Mammary epithelial cell (primary cell): ENCODE measurements at regions of chr2 and their contacts with region 1.

Region 1: DNA sequence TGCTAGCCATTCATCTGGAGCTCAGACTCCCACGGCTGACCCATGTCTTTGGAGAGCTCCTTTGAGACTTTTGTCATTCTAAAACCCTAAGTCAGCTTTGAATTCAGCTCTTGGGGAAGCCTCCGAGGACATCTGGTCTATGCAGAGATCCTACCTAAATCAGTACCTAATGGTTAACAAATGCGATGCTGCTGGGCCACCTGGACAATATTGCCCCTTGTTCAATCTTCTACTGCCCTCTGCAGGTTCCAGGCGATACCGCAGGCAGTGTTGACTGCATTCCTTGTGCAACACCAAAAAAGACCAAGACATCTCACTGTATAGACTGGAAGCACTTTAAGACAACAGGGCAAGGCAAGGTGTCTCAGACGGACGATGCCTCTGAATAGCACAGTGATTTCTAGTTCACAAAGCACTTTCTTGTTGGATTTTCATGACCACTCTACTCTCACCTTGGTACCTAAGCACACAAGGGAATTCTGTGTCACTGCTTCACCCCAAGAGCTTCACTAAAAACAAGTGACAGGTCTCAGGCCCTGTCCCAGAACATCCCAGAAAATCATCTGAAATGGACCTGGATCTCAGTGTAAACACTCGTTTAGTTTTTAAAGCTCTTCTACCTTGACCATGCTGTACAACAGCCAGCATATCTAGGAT is 80.9 kb downstream of the XDH start:
- DNase-seq: peak; percentile 82
- H3K4me3 ChIP-seq: no peak overlapping the region
- H3K27ac ChIP-seq: peak overlapping the region; percentile 93
- H3K4me1 ChIP-seq: peaks cover 48% of the 10 kb centered on the region
- H3K27me3 ChIP-seq: no peaks in the 10 kb centered on the region
- CTCF ChIP-seq: peak; percentile 98 to 99

Region 2: GRCh38 chr2:30862054-30862651 is 471.5 kb before region 1 on chr2:
- CTCF ChIA-PET with region 1: no interaction called
- dilution Hi-C with region 1: no loop called
- in situ Hi-C with region 1: loop called (anchors 10 kb)
- intact Hi-C with region 1: loop called (anchors 1 kb)
- DNase-seq: peak; percentile 61
- H3K4me3 ChIP-seq: no peak overlapping the region
- H3K27ac ChIP-seq: no peak overlapping the region
- H3K4me1 ChIP-seq: no peaks in the 10 kb centered on the region
- H3K27me3 ChIP-seq: no peaks in the 10 kb centered on the region
- CTCF ChIP-seq: peak; percentile 84 to 89

Region 3: GRCh38 chr2:31138037-31138962 is 195.4 kb before region 1 on chr2 and contains the start of gene GALNT14:
- CTCF ChIA-PET with region 1: no interaction called
- dilution Hi-C with region 1: no loop called
- in situ Hi-C with region 1: no loop called
- intact Hi-C with region 1: loop called (anchors 1 kb)
- DNase-seq: peak; percentile 82
- H3K4me3 ChIP-seq: peak within 1 kb of the TSS; percentile 71 to 88 (median 80)
- H3K27ac ChIP-seq: peak within 1 kb of the TSS; percentile 59
- H3K4me1 ChIP-seq: no peaks in the 10 kb centered on the region
- H3K27me3 ChIP-seq: no peaks in the 10 kb centered on the region
- CTCF ChIP-seq: peak; percentile 52 to 72
- total RNA-seq, gene GALNT14: 12.7 to 29.9 TPM

Region 4: DNA sequence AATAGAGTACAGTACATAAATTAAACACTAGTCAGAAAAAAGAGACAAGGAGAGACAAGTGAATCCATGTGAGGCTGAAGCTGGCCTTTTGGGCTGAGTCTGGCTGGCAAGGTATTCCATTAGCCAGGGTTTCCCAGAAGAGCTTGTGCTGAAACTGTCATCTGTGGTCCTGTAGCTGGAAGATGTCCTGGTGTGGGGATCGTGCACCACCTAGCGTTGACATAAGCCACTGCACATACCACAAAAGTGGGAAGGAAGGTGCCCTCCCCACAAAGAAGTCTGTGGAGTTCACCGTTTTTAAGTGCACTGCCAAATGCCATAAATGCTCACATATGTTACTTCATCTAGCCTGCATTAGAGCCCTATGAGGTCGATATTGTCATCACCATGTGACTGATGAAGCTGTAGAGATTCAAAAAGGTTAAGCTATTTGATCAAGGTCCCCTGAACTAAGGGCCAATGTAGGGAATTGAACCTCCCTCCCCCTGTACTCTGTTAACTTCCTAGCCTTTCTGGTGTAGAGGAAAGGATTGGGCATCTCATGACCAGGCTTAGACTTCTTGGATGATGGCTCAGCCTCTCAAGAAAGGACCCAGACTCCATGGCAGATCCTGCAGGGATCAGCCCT is 163.5 kb before region 1 on chr2:
- CTCF ChIA-PET with region 1: no interaction called
- dilution Hi-C with region 1: no loop called
- in situ Hi-C with region 1: loop called in 1 of 2 experiments (anchors 10 kb)
- intact Hi-C with region 1: loop called (anchors 1 kb)
- DNase-seq: peak; percentile 60
- H3K4me3 ChIP-seq: no peak overlapping the region
- H3K27ac ChIP-seq: no peak overlapping the region
- H3K4me1 ChIP-seq: no peaks in the 10 kb centered on the region
- H3K27me3 ChIP-seq: no peaks in the 10 kb centered on the region
- CTCF ChIP-seq: peak; percentile 97 to 98

Region 5: GRCh38 chr2:31269117-31269516 is 64.5 kb before region 1 on chr2:
- CTCF ChIA-PET with region 1: no interaction called
- dilution Hi-C with region 1: loop called (anchors 5 kb)
- in situ Hi-C with region 1: no loop called
- intact Hi-C with region 1: no loop called
- DNase-seq: no peak
- H3K4me3 ChIP-seq: no peak overlapping the region
- H3K27ac ChIP-seq: no peak overlapping the region
- H3K4me1 ChIP-seq: peaks cover 30% of the 10 kb centered on the region
- H3K27me3 ChIP-seq: no peaks in the 10 kb centered on the region
- CTCF ChIP-seq: no peak

Region 6: GRCh38 chr2:31428001-31428418 is 94.4 kb after region 1 on chr2:
- CTCF ChIA-PET with region 1: no interaction called
- dilution Hi-C with region 1: no loop called
- in situ Hi-C with region 1: loop called in 1 of 2 experiments (anchors 5 kb)
- intact Hi-C with region 1: loop called (anchors 1 kb)
- DNase-seq: peak; percentile 56
- H3K4me3 ChIP-seq: no peak overlapping the region
- H3K27ac ChIP-seq: no peak overlapping the region
- H3K4me1 ChIP-seq: peaks cover 35% of the 10 kb centered on the region
- H3K27me3 ChIP-seq: no peaks in the 10 kb centered on the region
- CTCF ChIP-seq: peak; percentile 18 to 42

Region 7: GRCh38 chr2:31523871-31524492 is 190.3 kb after region 1 on chr2:
- CTCF ChIA-PET with region 1: no interaction called
- dilution Hi-C with region 1: no loop called
- in situ Hi-C with region 1: no loop called
- intact Hi-C with region 1: loop called (anchors 5 kb)
- DNase-seq: peak; percentile 46
- H3K4me3 ChIP-seq: no peak overlapping the region
- H3K27ac ChIP-seq: no peak overlapping the region
- H3K4me1 ChIP-seq: no peaks in the 10 kb centered on the region
- H3K27me3 ChIP-seq: no peaks in the 10 kb centered on the region
- CTCF ChIP-seq: peak; percentile 76 to 77